Activated T-helper 1 cell treated with anti-CD3 and anti-CD28 coated beads, Interleukin-12 subunit alpha, Interleukin-12 subunit beta, Interleukin-2, Interleukin-4 antibody, amounts not matched to agents 30 ng/mL and 10 ng/mL and 1 ng/mL, durations not matched to agents 14 hours and 24 hours and 36 hours (primary cell): ENCODE measurements at regions of chr22 and their contacts with region 1.

Region 1: GRCh38 chr22:26672590-26673468 is 15.4 kb downstream of the MIAT start:
- DNase-seq: peak; percentile 91
- H3K4me3 Mint-ChIP-seq: peak overlapping the region; percentile 95
- H3K27ac Mint-ChIP-seq: peak overlapping the region; percentile 98
- H3K4me1 Mint-ChIP-seq: peaks cover 72% of the 10 kb centered on the region
- H3K27me3 Mint-ChIP-seq: no peaks in the 10 kb centered on the region

Region 2: DNA sequence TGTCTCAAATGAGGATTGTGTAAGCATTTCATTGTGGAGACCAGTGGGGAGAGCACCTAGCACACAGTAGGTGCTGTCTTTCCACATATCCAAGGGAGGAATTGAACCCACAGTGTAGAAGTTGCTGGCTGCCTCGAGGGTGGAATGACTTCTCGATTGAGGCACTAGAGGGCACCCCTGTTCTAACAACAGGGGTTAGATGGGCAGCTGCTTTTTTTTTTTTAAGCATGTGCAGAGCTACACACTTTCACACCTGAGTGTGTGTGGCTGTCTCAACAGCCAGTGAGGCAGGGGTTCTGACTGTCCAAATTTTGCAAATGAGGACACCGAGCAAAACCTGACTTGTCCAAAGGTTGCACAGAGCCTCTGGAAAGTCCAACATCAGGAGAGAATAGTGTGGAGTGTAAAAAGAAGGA is 1591.4 kb before region 1 on chr22:
- intact Hi-C with region 1: loop called (anchors 2 kb)
- DNase-seq: peak; percentile 33
- H3K4me3 Mint-ChIP-seq: no peak overlapping the region
- H3K27ac Mint-ChIP-seq: peak overlapping the region; percentile 72
- H3K4me1 Mint-ChIP-seq: peaks cover 83% of the 10 kb centered on the region
- H3K27me3 Mint-ChIP-seq: no peaks in the 10 kb centered on the region

Region 3: DNA sequence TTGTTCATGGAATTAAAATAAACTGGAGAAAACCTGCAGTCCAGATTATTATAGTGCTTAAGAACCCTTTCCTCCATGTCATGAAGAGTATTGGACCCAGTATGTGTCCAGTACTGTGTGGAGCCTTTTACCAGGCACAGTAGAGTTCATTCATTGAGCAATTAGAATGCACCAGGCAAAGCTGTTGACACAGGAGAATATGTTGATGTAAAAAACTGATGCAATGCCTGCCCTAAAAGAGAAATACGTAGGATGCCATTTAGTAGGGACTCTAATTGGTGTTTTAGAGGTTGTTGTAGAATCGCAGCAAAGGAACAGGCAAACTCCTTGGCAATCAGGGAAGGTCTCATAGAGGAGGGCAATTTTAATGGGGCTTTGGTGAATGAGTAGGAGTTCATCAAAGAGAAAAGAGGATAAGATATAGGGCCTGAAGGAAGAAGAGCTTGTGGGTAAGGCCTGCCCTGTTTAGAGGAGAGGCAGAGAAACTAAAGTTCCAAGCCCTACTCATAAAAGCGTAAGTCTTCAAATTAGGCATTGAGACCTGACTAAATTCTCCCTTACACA is 377.2 kb before region 1 on chr22:
- intact Hi-C with region 1: loop called (anchors 10 kb)
- DNase-seq: no peak
- H3K4me3 Mint-ChIP-seq: no peak overlapping the region
- H3K27ac Mint-ChIP-seq: no peak overlapping the region
- H3K4me1 Mint-ChIP-seq: peaks cover 13% of the 10 kb centered on the region
- H3K27me3 Mint-ChIP-seq: peaks cover 2% of the 10 kb centered on the region

Region 4: GRCh38 chr22:26483439-26484359 is 189.1 kb before region 1 on chr22 and contains the starts of genes HPS4 and SRRD:
- intact Hi-C with region 1: loop called (anchors 1 kb)
- DNase-seq: peak; percentile 93
- H3K4me3 Mint-ChIP-seq: peak within 1 kb of the TSS; percentile 95
- H3K27ac Mint-ChIP-seq: peak within 1 kb of the TSS; percentile 94
- H3K4me1 Mint-ChIP-seq: peaks cover 70% of the 10 kb centered on the region
- H3K27me3 Mint-ChIP-seq: no peaks in the 10 kb centered on the region
- total RNA-seq, gene HPS4: 43.8 and 44.5 TPM in 2 replicates
- total RNA-seq, gene SRRD: 29.2 and 34.8 TPM in 2 replicates

Region 5: DNA sequence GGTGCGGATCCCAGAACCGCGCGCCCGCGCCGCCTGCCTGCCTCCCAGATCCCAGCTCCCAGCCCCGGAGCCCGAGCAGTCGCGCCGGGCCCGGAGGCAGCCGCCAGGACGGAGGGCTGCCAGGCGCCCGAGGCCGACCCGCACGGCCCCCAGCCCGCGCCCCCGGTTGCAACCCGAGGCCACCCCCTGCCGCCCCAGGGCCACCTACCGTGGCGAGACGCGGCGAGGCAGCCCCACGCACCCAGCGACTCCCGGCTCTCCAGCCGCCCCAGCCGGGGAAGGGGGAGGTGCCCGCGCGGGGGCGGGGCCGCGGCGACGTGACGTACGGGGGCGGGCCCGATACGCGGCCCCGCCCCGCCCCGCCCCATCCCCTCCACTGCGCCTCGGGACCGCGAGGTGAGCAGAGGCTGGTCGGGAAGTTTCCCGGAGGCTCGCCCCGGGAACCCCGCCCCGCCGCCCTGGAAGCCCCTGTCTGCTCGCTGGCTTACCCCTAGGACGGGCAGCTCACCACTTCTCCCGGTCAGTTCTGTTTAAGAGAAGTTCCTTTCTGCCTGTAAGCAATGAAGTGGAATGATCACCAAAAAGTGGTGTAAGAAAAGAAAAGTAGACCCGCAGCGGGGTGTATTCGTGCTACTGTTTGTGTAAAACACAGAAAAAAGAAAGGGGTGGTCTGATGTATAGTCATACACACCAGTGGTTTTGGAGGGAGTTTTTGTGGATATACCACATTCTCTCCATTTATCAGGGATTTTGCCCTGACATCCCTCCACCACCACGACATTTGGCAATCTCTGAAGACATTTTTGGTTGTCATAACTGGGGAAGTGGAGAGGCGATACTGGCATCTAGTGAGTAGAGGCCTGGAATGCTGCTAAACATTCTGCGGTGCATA is 82.7 kb before region 1 on chr22 and contains the start of gene TPST2:
- intact Hi-C with region 1: loop called (anchors 1 kb)
- DNase-seq: peak; percentile 74
- H3K4me3 Mint-ChIP-seq: peak within 1 kb of the TSS; percentile 95
- H3K27ac Mint-ChIP-seq: peak within 1 kb of the TSS; percentile 94
- H3K4me1 Mint-ChIP-seq: peaks cover 79% of the 10 kb centered on the region
- H3K27me3 Mint-ChIP-seq: no peaks in the 10 kb centered on the region
- total RNA-seq, gene TPST2: 36.1 and 37.0 TPM in 2 replicates

Region 6: GRCh38 chr22:26658671-26659478 is 14.0 kb before region 1 on chr22:
- intact Hi-C with region 1: loop called (anchors 1 kb)
- DNase-seq: peak; percentile 78
- H3K4me3 Mint-ChIP-seq: peak overlapping the region; percentile 95
- H3K27ac Mint-ChIP-seq: peak overlapping the region; percentile 89
- H3K4me1 Mint-ChIP-seq: peaks cover 46% of the 10 kb centered on the region
- H3K27me3 Mint-ChIP-seq: peaks cover 9% of the 10 kb centered on the region